ENCODE measurements at regions of chr13 and their contacts with region 1.

Region 1: DNA sequence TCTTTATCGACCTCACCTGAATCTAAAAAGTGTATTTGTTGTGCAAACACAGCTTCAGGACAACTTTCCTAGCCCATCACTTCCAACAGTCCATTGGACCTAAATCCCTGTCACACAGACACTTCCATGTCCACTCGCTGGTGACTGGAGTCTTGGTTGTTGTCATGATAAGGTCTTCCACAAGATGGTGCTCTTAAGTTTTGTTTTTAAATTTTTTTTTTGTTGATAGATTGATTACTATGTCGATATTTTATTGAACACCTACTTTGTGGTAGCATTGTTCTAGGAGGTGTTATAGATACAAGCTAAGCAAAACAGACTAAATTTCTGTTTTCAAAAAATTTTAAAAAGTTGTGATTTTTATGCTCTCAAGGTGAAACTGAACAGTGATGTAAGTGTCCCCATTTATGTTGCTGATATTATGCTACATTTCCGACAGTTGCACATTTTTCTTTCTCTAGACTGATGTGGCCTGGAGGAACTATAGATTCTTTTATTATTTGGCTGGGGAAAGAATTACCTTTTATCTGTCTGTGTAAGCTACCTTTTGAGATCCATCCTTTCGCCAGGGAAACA is 8.1 kb upstream of the ERICH6B start:
- DNase-seq: peak; percentile 18
- ATAC-seq: peak; percentile 26
- H3K4me3 Mint-ChIP-seq: no peak overlapping the region
- H3K27ac Mint-ChIP-seq: no peak overlapping the region
- H3K4me1 Mint-ChIP-seq: no peaks in the 10 kb centered on the region
- H3K27me3 Mint-ChIP-seq: peaks cover 37% of the 10 kb centered on the region

Region 2: GRCh38 chr13:45718063-45718462 is 94.5 kb after region 1 on chr13:
- CTCF ChIA-PET with region 1: interaction called, 35 read pairs
- POLR2A ChIA-PET with region 1: no interaction called
- intact Hi-C with region 1: loop called (anchors 1 kb)
- DNase-seq: no peak
- ATAC-seq: peak; percentile 65
- H3K4me3 Mint-ChIP-seq: no peak overlapping the region
- H3K27ac Mint-ChIP-seq: no peak overlapping the region
- H3K4me1 Mint-ChIP-seq: no peaks in the 10 kb centered on the region
- H3K27me3 Mint-ChIP-seq: no peaks in the 10 kb centered on the region

Region 3: DNA sequence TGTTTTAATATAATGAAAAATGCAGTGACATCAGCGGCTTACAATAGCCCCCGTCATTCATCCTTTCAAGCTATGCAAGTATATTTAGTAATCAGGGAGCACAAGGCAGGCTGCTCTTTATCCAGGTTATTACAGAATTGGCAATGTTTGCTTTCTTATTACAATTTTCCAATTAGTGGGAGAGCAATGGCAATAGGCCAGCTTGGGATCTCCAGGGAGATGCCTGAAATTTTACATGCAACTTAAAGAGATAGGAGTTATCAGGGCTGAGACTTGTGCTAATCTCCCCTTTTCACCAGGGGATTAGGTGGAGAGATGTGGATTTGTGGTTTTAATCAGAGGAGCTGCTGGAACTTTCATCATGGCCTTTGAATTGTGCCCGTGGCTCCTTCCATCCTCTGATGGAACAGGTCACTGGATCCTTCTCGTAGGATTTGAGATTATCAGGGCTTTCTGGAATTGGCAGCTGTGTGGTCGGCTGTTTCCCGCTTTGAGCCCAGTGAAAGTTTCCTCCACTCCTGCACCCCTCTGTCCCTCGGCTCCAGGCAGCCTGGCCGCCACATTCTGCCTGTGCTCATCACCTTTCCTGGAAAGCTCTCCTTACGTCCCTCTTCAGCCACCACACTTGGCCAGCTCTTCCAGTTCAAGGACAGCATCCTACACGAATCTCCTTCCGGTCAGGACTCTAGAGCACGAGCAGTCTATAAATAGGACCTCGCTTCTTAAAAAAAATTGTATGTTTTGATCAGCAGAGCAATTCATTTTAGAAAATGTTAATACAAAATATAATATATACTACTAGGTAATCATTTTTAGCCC is 125.5 kb after region 1 on chr13:
- CTCF ChIA-PET with region 1: no interaction called
- POLR2A ChIA-PET with region 1: no interaction called
- intact Hi-C with region 1: no loop called
- DNase-seq: no peak
- ATAC-seq: no peak
- H3K4me3 Mint-ChIP-seq: no peak overlapping the region
- H3K27ac Mint-ChIP-seq: no peak overlapping the region
- H3K4me1 Mint-ChIP-seq: no peaks in the 10 kb centered on the region
- H3K27me3 Mint-ChIP-seq: no peaks in the 10 kb centered on the region

Region 4: GRCh38 chr13:45781553-45782326 is 158.1 kb after region 1 on chr13:
- CTCF ChIA-PET with region 1: no interaction called
- POLR2A ChIA-PET with region 1: no interaction called
- intact Hi-C with region 1: no loop called
- DNase-seq: no peak
- ATAC-seq: peak; percentile 42
- H3K4me3 Mint-ChIP-seq: no peak overlapping the region
- H3K27ac Mint-ChIP-seq: no peak overlapping the region
- H3K4me1 Mint-ChIP-seq: peaks cover 27% of the 10 kb centered on the region
- H3K27me3 Mint-ChIP-seq: no peaks in the 10 kb centered on the region

Region 5: DNA sequence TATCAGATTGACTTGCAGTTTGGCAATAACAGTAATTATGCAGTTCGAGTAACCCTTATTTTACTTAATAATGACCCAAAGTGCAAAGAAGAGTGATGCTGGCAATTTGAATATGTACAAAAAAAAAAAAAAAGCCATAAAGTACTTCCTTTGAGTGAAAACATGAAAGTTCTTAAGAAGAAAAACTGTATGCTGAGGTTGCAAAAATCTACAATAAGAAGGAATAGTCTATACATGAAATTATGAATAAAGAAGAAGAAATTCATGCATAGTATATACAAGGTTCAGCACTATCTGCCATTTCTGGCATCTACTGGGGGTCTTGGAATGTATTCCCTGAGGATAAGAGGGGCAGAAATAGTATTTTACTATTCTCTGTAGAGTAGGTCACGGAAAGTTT is 373.0 kb after region 1 on chr13:
- CTCF ChIA-PET with region 1: no interaction called
- POLR2A ChIA-PET with region 1: no interaction called
- intact Hi-C with region 1: no loop called
- DNase-seq: no peak
- ATAC-seq: no peak
- H3K4me3 Mint-ChIP-seq: no peak overlapping the region
- H3K27ac Mint-ChIP-seq: no peak overlapping the region
- H3K4me1 Mint-ChIP-seq: peaks cover 11% of the 10 kb centered on the region
- H3K27me3 Mint-ChIP-seq: no peaks in the 10 kb centered on the region

Region 6: GRCh38 chr13:46010148-46010547 is 386.5 kb after region 1 on chr13:
- CTCF ChIA-PET with region 1: no interaction called
- POLR2A ChIA-PET with region 1: no interaction called
- intact Hi-C with region 1: loop called in 1 of 2 experiments (anchors 10 kb)
- DNase-seq: no peak
- ATAC-seq: no peak
- H3K4me3 Mint-ChIP-seq: no peak overlapping the region
- H3K27ac Mint-ChIP-seq: no peak overlapping the region
- H3K4me1 Mint-ChIP-seq: peaks cover 7% of the 10 kb centered on the region
- H3K27me3 Mint-ChIP-seq: no peaks in the 10 kb centered on the region

Region 7: DNA sequence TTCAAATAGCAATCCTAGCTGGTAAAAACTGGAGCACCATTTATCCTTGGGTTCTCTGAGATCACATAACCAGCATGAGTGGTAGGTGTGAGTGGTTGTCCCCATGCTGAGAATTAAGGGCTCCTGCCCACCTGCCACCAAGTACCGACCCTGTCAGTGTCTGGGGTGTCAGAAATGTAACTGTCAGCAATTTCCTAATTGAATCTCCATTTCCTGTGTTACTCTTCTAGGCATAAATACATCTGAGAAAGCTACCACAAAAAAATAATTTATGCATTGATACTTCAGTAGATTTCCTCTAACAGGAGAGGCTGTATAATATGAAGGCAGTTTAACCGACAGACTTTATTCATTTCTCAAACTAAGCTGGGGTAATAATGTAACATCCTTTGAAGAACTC is 456.2 kb after region 1 on chr13:
- CTCF ChIA-PET with region 1: no interaction called
- POLR2A ChIA-PET with region 1: no interaction called
- intact Hi-C with region 1: loop called in 1 of 2 experiments (anchors 10 kb)
- DNase-seq: no peak
- ATAC-seq: no peak
- H3K4me3 Mint-ChIP-seq: no peak overlapping the region
- H3K27ac Mint-ChIP-seq: no peak overlapping the region
- H3K4me1 Mint-ChIP-seq: peaks cover 21% of the 10 kb centered on the region
- H3K27me3 Mint-ChIP-seq: no peaks in the 10 kb centered on the region

Region 8: DNA sequence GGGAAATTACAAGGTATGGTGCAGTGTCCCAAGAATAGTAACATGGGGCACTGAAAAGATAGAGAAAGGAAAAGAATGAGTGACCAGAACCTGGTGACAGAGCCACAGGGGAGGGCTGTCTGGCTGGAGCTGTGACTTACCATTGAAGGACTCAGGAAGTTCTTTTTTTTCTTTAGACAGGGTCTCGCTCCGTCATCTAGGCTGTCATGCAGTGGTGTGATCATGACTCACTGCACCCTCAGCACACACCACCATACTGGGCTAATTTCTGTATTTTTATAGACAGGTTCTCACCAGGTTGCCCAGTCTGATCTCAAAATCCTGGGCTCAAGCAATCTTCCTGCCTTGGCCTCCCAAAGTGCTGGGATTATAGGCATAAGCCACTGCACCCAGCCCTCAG is 490.0 kb after region 1 on chr13:
- CTCF ChIA-PET with region 1: no interaction called
- POLR2A ChIA-PET with region 1: no interaction called
- intact Hi-C with region 1: loop called in 1 of 2 experiments (anchors 5 kb)
- DNase-seq: no peak
- ATAC-seq: no peak
- H3K4me3 Mint-ChIP-seq: no peak overlapping the region
- H3K27ac Mint-ChIP-seq: no peak overlapping the region
- H3K4me1 Mint-ChIP-seq: no peaks in the 10 kb centered on the region
- H3K27me3 Mint-ChIP-seq: peaks cover 15% of the 10 kb centered on the region

Region 9: DNA sequence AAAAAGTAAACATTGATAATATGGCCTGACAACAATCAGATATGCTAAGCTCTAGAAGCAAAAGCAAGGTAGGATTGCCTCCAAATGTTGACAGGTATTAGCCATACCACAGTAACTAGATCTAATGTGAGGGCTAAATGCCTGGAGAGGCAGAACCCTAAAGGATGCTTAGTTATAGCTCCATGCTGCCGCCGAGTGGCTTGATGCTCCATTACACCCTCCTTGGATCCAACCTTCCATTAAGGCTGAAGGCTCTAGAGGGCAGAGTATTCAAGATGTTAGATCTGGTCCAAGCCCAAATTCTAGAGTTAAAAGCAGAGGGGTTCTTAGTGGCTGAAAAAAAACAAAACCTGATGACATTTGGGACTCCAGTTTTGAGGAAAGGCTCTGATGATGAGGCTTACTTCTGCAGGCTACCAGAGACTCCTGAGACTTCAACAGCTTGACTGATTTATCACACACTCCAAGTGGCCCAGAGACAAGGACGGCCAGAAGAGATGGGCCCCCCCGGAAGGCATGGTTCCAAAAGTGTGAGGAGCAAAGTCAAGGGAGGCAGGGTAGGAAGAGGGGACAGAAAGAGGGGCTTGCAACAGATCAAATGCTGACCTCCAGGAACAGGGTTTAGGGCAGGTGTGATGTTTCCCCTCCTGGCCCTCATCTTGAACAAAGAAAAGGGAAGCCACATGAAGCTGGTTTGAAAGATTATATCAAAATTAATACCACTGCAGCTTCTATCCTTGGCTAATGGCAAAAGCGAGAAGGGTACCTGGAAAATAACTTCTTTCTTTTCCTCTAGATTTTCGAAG is 503.2 kb after region 1 on chr13:
- CTCF ChIA-PET with region 1: interaction called, 4 read pairs
- POLR2A ChIA-PET with region 1: interaction called, 3 read pairs
- intact Hi-C with region 1: loop called (anchors 5 to 10 kb)
- DNase-seq: peak; percentile 86
- ATAC-seq: peak; percentile 86
- H3K4me3 Mint-ChIP-seq: no peak overlapping the region
- H3K27ac Mint-ChIP-seq: peak overlapping the region; percentile 76
- H3K4me1 Mint-ChIP-seq: peaks cover 39% of the 10 kb centered on the region
- H3K27me3 Mint-ChIP-seq: no peaks in the 10 kb centered on the region

Region 10: GRCh38 chr13:46288570-46289259 is 665.1 kb after region 1 on chr13:
- CTCF ChIA-PET with region 1: no interaction called
- POLR2A ChIA-PET with region 1: no interaction called
- intact Hi-C with region 1: loop called in 1 of 2 experiments (anchors 10 kb)
- DNase-seq: no peak
- ATAC-seq: peak; percentile 82
- H3K4me3 Mint-ChIP-seq: no peak overlapping the region
- H3K27ac Mint-ChIP-seq: no peak overlapping the region
- H3K4me1 Mint-ChIP-seq: peaks cover 27% of the 10 kb centered on the region
- H3K27me3 Mint-ChIP-seq: no peaks in the 10 kb centered on the region

Measured in activated CD4-positive, alpha-beta T cell treated with anti-CD3 and anti-CD28 coated beads for 36 hours (primary cell).